ENCODE measurements at regions of chr6 and their contacts with region 1.

Region 1: GRCh38 chr6:31139599-31139998 is 733 bp upstream of the PSORS1C2 start:
- DNase-seq: no peak
- ATAC-seq: no peak
- H3K4me3 ChIP-seq: no peak overlapping the region
- H3K27ac ChIP-seq: no peak overlapping the region
- H3K4me1 ChIP-seq: peaks cover 4% of the 10 kb centered on the region
- H3K27me3 ChIP-seq: no peaks in the 10 kb centered on the region
- CTCF ChIP-seq: no peak

Region 2: GRCh38 chr6:30686908-30687658 is 452.5 kb before region 1 on chr6:
- intact Hi-C with region 1: no loop called
- DNase-seq: peak; percentile 94
- ATAC-seq: peak; percentile 70
- H3K4me3 ChIP-seq: peak overlapping the region; percentile 78
- H3K27ac ChIP-seq: peak overlapping the region; percentile 92
- H3K4me1 ChIP-seq: peaks cover 42% of the 10 kb centered on the region
- H3K27me3 ChIP-seq: no peaks in the 10 kb centered on the region
- CTCF ChIP-seq: no peak

Region 3: GRCh38 chr6:30828027-30828960 is 311.3 kb before region 1 on chr6:
- intact Hi-C with region 1: no loop called
- DNase-seq: peak; percentile 88
- ATAC-seq: peak; percentile 96
- H3K4me3 ChIP-seq: no peak overlapping the region
- H3K27ac ChIP-seq: peak overlapping the region; percentile 69
- H3K4me1 ChIP-seq: peaks cover 10% of the 10 kb centered on the region
- H3K27me3 ChIP-seq: no peaks in the 10 kb centered on the region
- CTCF ChIP-seq: peak; percentile 96

Region 4: DNA sequence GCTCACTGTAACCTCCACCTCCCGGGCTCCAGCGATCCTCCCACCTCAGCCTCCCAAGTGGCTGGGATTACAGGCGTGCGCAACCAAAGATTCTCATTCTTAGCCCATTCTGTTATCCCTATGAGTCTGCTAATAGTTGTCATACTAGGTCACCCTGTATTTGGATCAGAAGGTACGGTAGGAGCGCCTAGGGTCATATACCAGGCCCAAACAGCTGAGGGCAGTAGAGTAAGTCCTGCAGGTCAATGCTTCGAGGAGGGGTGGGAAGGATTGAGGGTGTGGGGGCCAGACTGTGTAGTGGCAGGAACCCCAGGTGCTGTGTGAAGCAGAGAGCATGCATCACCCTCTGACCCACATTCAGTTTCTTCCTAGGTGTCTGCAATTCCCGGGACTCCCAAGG is 53.6 kb after region 1 on chr6:
- intact Hi-C with region 1: loop called (anchors 5 kb)
- DNase-seq: peak; percentile 18
- ATAC-seq: no peak
- H3K4me3 ChIP-seq: no peak overlapping the region
- H3K27ac ChIP-seq: no peak overlapping the region
- H3K4me1 ChIP-seq: no peaks in the 10 kb centered on the region
- H3K27me3 ChIP-seq: no peaks in the 10 kb centered on the region
- CTCF ChIP-seq: no peak

Region 5: GRCh38 chr6:31379850-31380249 is 240.3 kb after region 1 on chr6:
- intact Hi-C with region 1: loop called (anchors 5 kb)
- DNase-seq: no peak
- ATAC-seq: peak; percentile 60
- H3K4me3 ChIP-seq: no peak overlapping the region
- H3K27ac ChIP-seq: no peak overlapping the region
- H3K4me1 ChIP-seq: no peaks in the 10 kb centered on the region
- H3K27me3 ChIP-seq: peaks cover 30% of the 10 kb centered on the region
- CTCF ChIP-seq: no peak